ENCODE measurements at regions of chr6 and their contacts with region 1.

Region 1: GRCh38 chr6:52263709-52264540 is 19.6 kb upstream of the IL17F start:
- DNase-seq: peak; percentile 44 to 79 (median 67)
- ATAC-seq: peak; percentile 79
- H3K4me3 ChIP-seq: no peak overlapping the region
- H3K4me3 Mint-ChIP-seq: no peak overlapping the region
- H3K27ac ChIP-seq: no peak overlapping the region
- H3K27ac Mint-ChIP-seq: no peak overlapping the region
- H3K4me1 ChIP-seq: peaks cover 12% of the 10 kb centered on the region
- H3K4me1 Mint-ChIP-seq: peaks cover 14% of the 10 kb centered on the region
- H3K27me3 ChIP-seq: no peaks in the 10 kb centered on the region
- H3K27me3 Mint-ChIP-seq: no peaks in the 10 kb centered on the region
- CTCF ChIP-seq: peak; percentile 96

Region 2: DNA sequence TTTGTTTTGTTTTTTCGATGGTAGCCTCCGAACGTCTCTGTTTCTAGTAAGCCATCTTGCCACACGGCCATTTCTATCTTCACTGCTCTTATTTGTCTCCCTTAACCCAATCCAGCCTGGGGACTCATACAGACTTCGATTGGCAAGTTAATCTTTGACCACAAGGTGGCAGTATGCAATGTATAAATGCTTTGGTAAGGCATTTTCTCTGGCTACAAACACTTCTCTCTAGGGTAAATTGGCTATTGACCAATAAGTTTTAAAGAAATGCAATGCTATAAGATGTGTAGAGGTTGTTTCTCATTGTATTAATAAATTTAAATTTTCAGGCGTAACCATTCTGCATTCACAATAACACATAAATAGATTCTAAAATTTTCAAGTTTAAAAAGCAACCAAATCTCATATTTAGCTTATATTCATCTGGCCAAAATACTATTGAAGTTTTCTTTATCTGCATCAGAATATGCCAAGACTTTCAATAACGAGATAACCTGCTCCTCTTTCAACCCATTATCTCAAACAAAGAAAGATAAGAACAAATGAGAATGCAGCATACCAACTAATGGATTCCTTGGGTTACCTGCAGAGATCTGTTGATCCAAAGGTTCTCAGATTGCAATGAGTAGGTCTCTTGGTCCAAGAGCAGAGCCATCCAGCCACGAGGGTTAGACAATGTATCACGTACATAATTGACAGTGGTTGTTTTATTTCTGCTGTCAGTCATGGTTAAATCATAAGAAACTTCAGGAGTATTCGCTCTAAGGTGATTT is 408.4 kb before region 1 on chr6:
- CTCF ChIA-PET with region 1: no interaction called
- POLR2A ChIA-PET with region 1: no interaction called
- intact Hi-C with region 1: loop called in 1 of 2 experiments (anchors 10 kb)
- DNase-seq: peak in 2 of 9 experiments; percentile 28 to 49
- ATAC-seq: no peak
- H3K4me3 ChIP-seq: no peak overlapping the region
- H3K4me3 Mint-ChIP-seq: no peak overlapping the region
- H3K27ac ChIP-seq: no peak overlapping the region
- H3K27ac Mint-ChIP-seq: no peak overlapping the region
- H3K4me1 ChIP-seq: no peaks in the 10 kb centered on the region
- H3K4me1 Mint-ChIP-seq: no peaks in the 10 kb centered on the region
- H3K27me3 ChIP-seq: no peaks in the 10 kb centered on the region
- H3K27me3 Mint-ChIP-seq: peaks cover 8% of the 10 kb centered on the region
- CTCF ChIP-seq: peak; percentile 65

Region 3: GRCh38 chr6:52098634-52099185 is 165.2 kb before region 1 on chr6:
- CTCF ChIA-PET with region 1: interaction called, 5 read pairs
- POLR2A ChIA-PET with region 1: no interaction called
- intact Hi-C with region 1: loop called (anchors 1 to 5 kb)
- DNase-seq: no peak
- ATAC-seq: no peak
- H3K4me3 ChIP-seq: no peak overlapping the region
- H3K4me3 Mint-ChIP-seq: no peak overlapping the region
- H3K27ac ChIP-seq: no peak overlapping the region
- H3K27ac Mint-ChIP-seq: no peak overlapping the region
- H3K4me1 ChIP-seq: no peaks in the 10 kb centered on the region
- H3K4me1 Mint-ChIP-seq: no peaks in the 10 kb centered on the region
- H3K27me3 ChIP-seq: peaks cover 3 to 7% of the 10 kb centered on the region in 2 experiments
- H3K27me3 Mint-ChIP-seq: peaks cover 27% of the 10 kb centered on the region
- CTCF ChIP-seq: no peak

Region 4: GRCh38 chr6:52183131-52183713 is 80.7 kb before region 1 on chr6:
- CTCF ChIA-PET with region 1: interaction called, 14 read pairs
- POLR2A ChIA-PET with region 1: interaction called, 5 read pairs
- intact Hi-C with region 1: no loop called
- DNase-seq: no peak
- ATAC-seq: no peak
- H3K4me3 ChIP-seq: no peak overlapping the region
- H3K4me3 Mint-ChIP-seq: no peak overlapping the region
- H3K27ac ChIP-seq: no peak overlapping the region
- H3K27ac Mint-ChIP-seq: no peak overlapping the region
- H3K4me1 ChIP-seq: no peaks in the 10 kb centered on the region
- H3K4me1 Mint-ChIP-seq: peaks cover 6% of the 10 kb centered on the region
- H3K27me3 ChIP-seq: no peaks in the 10 kb centered on the region
- H3K27me3 Mint-ChIP-seq: peaks cover 36% of the 10 kb centered on the region
- CTCF ChIP-seq: no peak

Region 5: GRCh38 chr6:52233975-52234823 is 29.7 kb before region 1 on chr6:
- CTCF ChIA-PET with region 1: interaction called, 14 read pairs
- POLR2A ChIA-PET with region 1: no interaction called
- intact Hi-C with region 1: no loop called
- DNase-seq: no peak
- ATAC-seq: no peak
- H3K4me3 ChIP-seq: no peak overlapping the region
- H3K4me3 Mint-ChIP-seq: no peak overlapping the region
- H3K27ac ChIP-seq: no peak overlapping the region
- H3K27ac Mint-ChIP-seq: no peak overlapping the region
- H3K4me1 ChIP-seq: no peaks in the 10 kb centered on the region
- H3K4me1 Mint-ChIP-seq: peaks cover 5% of the 10 kb centered on the region
- H3K27me3 ChIP-seq: peaks cover 0 to 5% of the 10 kb centered on the region in 2 experiments
- H3K27me3 Mint-ChIP-seq: peaks cover 21% of the 10 kb centered on the region
- CTCF ChIP-seq: no peak

Region 6: GRCh38 chr6:52253494-52253893 is 10.4 kb before region 1 on chr6:
- CTCF ChIA-PET with region 1: interaction called, 12 read pairs
- POLR2A ChIA-PET with region 1: no interaction called
- intact Hi-C with region 1: no loop called
- DNase-seq: no peak
- ATAC-seq: no peak
- H3K4me3 ChIP-seq: no peak overlapping the region
- H3K4me3 Mint-ChIP-seq: no peak overlapping the region
- H3K27ac ChIP-seq: no peak overlapping the region
- H3K27ac Mint-ChIP-seq: no peak overlapping the region
- H3K4me1 ChIP-seq: no peaks in the 10 kb centered on the region
- H3K4me1 Mint-ChIP-seq: no peaks in the 10 kb centered on the region
- H3K27me3 ChIP-seq: peaks cover 0 to 5% of the 10 kb centered on the region in 2 experiments
- H3K27me3 Mint-ChIP-seq: peaks cover 27% of the 10 kb centered on the region
- CTCF ChIP-seq: no peak

Region 7: GRCh38 chr6:52330470-52330869 is 66.5 kb after region 1 on chr6:
- CTCF ChIA-PET with region 1: no interaction called
- POLR2A ChIA-PET with region 1: no interaction called
- intact Hi-C with region 1: no loop called
- DNase-seq: no peak
- ATAC-seq: no peak
- H3K4me3 ChIP-seq: no peak overlapping the region
- H3K4me3 Mint-ChIP-seq: no peak overlapping the region
- H3K27ac ChIP-seq: no peak overlapping the region
- H3K27ac Mint-ChIP-seq: no peak overlapping the region
- H3K4me1 ChIP-seq: peaks cover 41% of the 10 kb centered on the region
- H3K4me1 Mint-ChIP-seq: peaks cover 46% of the 10 kb centered on the region
- H3K27me3 ChIP-seq: no peaks in the 10 kb centered on the region
- H3K27me3 Mint-ChIP-seq: no peaks in the 10 kb centered on the region
- CTCF ChIP-seq: no peak

Region 8: DNA sequence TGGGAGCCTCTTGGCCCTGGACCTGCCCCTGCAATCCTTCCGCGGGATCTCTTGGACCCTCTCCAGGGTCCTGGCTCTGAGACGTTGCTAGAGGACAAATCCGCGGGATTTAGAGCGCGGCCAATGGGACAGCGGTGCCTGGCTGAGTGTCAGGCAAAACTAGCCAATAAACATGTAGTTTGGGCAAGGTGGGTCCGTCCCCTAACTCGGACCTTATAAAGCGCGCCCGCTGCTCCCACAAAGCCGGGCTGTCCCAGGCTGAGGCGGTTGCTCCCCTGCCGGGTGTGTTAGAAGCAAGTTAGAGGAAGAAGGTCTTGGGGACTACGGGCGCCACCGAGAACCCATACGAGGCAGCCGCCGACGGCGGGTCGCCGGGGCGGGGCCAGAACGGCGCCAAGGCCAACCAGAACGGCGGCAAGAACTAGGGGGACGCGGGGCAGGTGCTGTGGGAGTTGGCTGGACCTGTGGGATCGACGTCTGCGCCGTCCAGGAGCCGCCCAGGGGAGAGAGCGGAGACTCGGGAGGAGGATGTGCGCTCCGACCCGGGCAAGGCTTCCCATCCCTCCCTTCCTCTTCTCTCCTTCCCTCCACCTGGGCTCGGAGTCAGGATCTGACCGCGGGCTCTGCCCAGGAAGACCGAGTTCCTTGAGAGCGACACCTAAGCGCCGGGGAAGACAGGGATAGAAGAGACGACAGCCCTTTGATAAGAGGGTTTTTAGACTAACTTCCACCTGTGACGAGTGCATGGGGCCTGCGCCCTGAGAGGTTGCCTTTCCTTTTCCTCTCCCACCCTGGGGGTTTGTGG is 400.5 kb after region 1 on chr6:
- CTCF ChIA-PET with region 1: interaction called, 8 read pairs
- POLR2A ChIA-PET with region 1: no interaction called
- intact Hi-C with region 1: loop called (anchors 1 to 2 kb)
- DNase-seq: peak; percentile 5 to 70 (median 45)
- ATAC-seq: peak; percentile 66
- H3K4me3 ChIP-seq: peak overlapping the region; percentile 61 to 82
- H3K4me3 Mint-ChIP-seq: no peak overlapping the region
- H3K27ac ChIP-seq: no peak overlapping the region
- H3K27ac Mint-ChIP-seq: no peak overlapping the region
- H3K4me1 ChIP-seq: peaks cover 14% of the 10 kb centered on the region
- H3K4me1 Mint-ChIP-seq: no peaks in the 10 kb centered on the region
- H3K27me3 ChIP-seq: peaks cover 0 to 10% of the 10 kb centered on the region in 2 experiments
- H3K27me3 Mint-ChIP-seq: no peaks in the 10 kb centered on the region
- CTCF ChIP-seq: no peak